MCF 10A (cell line): ENCODE measurements at regions of chr16 and their contacts with region 1.

Region 1: GRCh38 chr16:75519881-75520280 is 16.0 kb downstream of the CHST5 start:
- DNase-seq: no peak
- H3K4me3 Mint-ChIP-seq: no peak overlapping the region
- H3K27ac Mint-ChIP-seq: no peak overlapping the region
- H3K4me1 Mint-ChIP-seq: no peaks in the 10 kb centered on the region
- H3K27me3 Mint-ChIP-seq: no peaks in the 10 kb centered on the region
- CTCF ChIP-seq: no peak

Region 2: GRCh38 chr16:75471723-75472633 is 47.9 kb before region 1 on chr16:
- CTCF ChIA-PET with region 1: interaction called, 88 read pairs
- POLR2A ChIA-PET with region 1: interaction called, 9 read pairs
- intact Hi-C with region 1: loop called (anchors 1 kb)
- DNase-seq: peak; percentile 74
- H3K4me3 Mint-ChIP-seq: no peak overlapping the region
- H3K27ac Mint-ChIP-seq: no peak overlapping the region
- H3K4me1 Mint-ChIP-seq: peaks cover 9% of the 10 kb centered on the region
- H3K27me3 Mint-ChIP-seq: no peaks in the 10 kb centered on the region
- CTCF ChIP-seq: peak; percentile 77

Region 3: DNA sequence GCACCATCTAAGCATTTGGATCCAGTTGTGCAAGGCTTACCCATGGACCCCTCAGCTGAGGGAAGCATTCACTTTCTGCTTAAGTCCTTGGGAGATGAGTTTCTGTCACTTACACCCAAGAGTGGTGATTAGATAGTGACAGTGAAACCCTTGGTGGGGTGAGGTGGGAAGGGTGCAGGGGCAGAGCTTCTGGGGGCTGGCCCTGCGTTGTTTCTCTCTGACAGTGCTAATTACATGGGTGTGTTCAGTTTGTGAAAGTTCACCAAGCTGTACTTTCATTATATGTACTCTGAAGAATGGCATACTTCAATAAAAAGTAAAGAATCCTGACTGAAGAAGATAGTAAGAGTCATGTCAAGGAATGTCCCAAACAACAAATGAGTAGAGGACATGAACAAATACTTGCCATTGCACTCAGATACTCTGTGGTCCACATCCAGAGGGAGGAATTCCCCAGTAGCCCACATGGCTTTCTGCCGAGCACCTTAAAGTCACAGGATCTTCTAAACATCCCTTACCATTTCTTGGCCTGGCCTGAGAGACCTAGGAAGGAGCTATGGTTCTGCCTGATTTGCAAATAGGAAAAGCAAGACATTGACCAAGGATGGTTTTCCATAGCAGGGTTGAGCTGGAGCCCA is 33.1 kb before region 1 on chr16:
- CTCF ChIA-PET with region 1: interaction called, 18 read pairs
- POLR2A ChIA-PET with region 1: interaction called, 46 read pairs
- intact Hi-C with region 1: loop called (anchors 1 kb)
- DNase-seq: no peak
- H3K4me3 Mint-ChIP-seq: no peak overlapping the region
- H3K27ac Mint-ChIP-seq: peak overlapping the region; percentile 70
- H3K4me1 Mint-ChIP-seq: peaks cover 36% of the 10 kb centered on the region
- H3K27me3 Mint-ChIP-seq: no peaks in the 10 kb centered on the region
- CTCF ChIP-seq: no peak

Region 4: GRCh38 chr16:75506567-75506966 is 13.3 kb before region 1 on chr16:
- CTCF ChIA-PET with region 1: interaction called, 22 read pairs
- POLR2A ChIA-PET with region 1: interaction called, 9 read pairs
- intact Hi-C with region 1: no loop called
- DNase-seq: peak; percentile 98
- H3K4me3 Mint-ChIP-seq: peak overlapping the region; percentile 42
- H3K27ac Mint-ChIP-seq: peak overlapping the region; percentile 95
- H3K4me1 Mint-ChIP-seq: peaks cover 34% of the 10 kb centered on the region
- H3K27me3 Mint-ChIP-seq: no peaks in the 10 kb centered on the region
- CTCF ChIP-seq: no peak

Region 5: GRCh38 chr16:75555707-75556430 is 36.0 kb after region 1 on chr16 and contains the start of gene TMEM231:
- CTCF ChIA-PET with region 1: interaction called, 9 read pairs
- POLR2A ChIA-PET with region 1: interaction called, 13 read pairs
- intact Hi-C with region 1: loop called (anchors 2 kb)
- DNase-seq: peak; percentile 94
- H3K4me3 Mint-ChIP-seq: peak within 1 kb of the TSS; percentile 85
- H3K27ac Mint-ChIP-seq: peak within 1 kb of the TSS; percentile 91
- H3K4me1 Mint-ChIP-seq: peaks cover 6% of the 10 kb centered on the region
- H3K27me3 Mint-ChIP-seq: no peaks in the 10 kb centered on the region
- CTCF ChIP-seq: no peak
- total RNA-seq, gene TMEM231: 18.6 and 21.1 TPM in 2 replicates

Region 6: GRCh38 chr16:75622761-75623605 is 103.1 kb after region 1 on chr16 and contains the start of gene ADAT1:
- CTCF ChIA-PET with region 1: interaction called, 4 read pairs
- POLR2A ChIA-PET with region 1: interaction called, 12 read pairs
- intact Hi-C with region 1: loop called (anchors 5 kb)
- DNase-seq: peak; percentile 98
- H3K4me3 Mint-ChIP-seq: peak within 1 kb of the TSS; percentile 84
- H3K27ac Mint-ChIP-seq: peak within 1 kb of the TSS; percentile 72
- H3K4me1 Mint-ChIP-seq: peaks cover 25% of the 10 kb centered on the region
- H3K27me3 Mint-ChIP-seq: no peaks in the 10 kb centered on the region
- CTCF ChIP-seq: no peak
- total RNA-seq, gene ADAT1: 48.7 and 60.2 TPM in 2 replicates

Region 7: DNA sequence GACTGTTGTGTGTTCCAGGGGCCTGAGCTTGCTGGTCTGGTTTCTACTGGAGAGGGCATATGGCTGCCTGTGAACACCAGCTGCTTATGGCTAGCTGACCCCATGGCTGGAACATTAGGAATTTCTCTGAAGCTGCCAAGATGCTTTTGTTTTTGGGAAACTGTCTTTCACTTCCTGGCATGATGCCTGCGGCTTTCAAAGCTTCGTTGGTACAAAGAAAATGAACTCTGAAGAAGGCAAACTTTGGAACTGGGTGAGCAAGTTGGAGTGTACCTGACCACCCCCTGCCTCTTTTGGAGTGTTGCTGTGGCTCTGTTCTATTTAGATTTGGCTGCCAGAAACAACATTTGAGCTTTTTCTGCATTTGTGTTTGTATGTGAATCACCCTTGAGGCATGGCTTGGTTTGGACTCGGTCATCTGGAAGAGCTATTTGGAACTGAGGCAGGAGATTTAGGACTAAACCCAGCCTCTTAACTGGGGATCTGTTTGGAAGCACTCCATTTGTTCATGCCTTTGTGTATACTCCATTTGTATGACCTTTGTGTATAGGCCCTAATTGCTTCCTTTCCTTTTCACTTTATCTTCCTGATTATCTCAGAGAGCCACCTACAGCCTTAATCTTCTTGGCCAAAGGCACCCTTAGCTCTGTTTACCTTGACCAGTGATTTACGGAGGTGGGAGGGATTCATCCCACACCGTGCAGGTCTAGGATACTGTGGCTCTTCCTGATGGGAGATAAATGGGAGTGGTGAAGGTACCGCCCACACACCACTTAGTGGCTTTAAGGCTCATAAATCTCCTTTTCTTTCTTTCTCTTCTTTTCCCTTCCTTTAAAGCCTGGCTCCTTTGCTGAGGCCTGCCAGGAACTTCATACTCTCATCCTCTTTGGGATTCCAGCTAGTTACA is 213.7 kb after region 1 on chr16:
- CTCF ChIA-PET with region 1: no interaction called
- POLR2A ChIA-PET with region 1: no interaction called
- intact Hi-C with region 1: no loop called
- DNase-seq: peak; percentile 46
- H3K4me3 Mint-ChIP-seq: peak overlapping the region; percentile 4
- H3K27ac Mint-ChIP-seq: peak overlapping the region; percentile 37
- H3K4me1 Mint-ChIP-seq: peaks cover 15% of the 10 kb centered on the region
- H3K27me3 Mint-ChIP-seq: no peaks in the 10 kb centered on the region
- CTCF ChIP-seq: no peak

Region 8: GRCh38 chr16:75764154-75764768 is 244.4 kb after region 1 on chr16:
- CTCF ChIA-PET with region 1: no interaction called
- POLR2A ChIA-PET with region 1: no interaction called
- intact Hi-C with region 1: loop called (anchors 1 kb)
- DNase-seq: peak; percentile 75
- H3K4me3 Mint-ChIP-seq: no peak overlapping the region
- H3K27ac Mint-ChIP-seq: no peak overlapping the region
- H3K4me1 Mint-ChIP-seq: peaks cover 5% of the 10 kb centered on the region
- H3K27me3 Mint-ChIP-seq: peaks cover 13% of the 10 kb centered on the region
- CTCF ChIP-seq: peak; percentile 67

Region 9: GRCh38 chr16:76007649-76008048 is 487.8 kb after region 1 on chr16:
- CTCF ChIA-PET with region 1: no interaction called
- POLR2A ChIA-PET with region 1: no interaction called
- intact Hi-C with region 1: no loop called
- DNase-seq: no peak
- H3K4me3 Mint-ChIP-seq: no peak overlapping the region
- H3K27ac Mint-ChIP-seq: no peak overlapping the region
- H3K4me1 Mint-ChIP-seq: no peaks in the 10 kb centered on the region
- H3K27me3 Mint-ChIP-seq: no peaks in the 10 kb centered on the region
- CTCF ChIP-seq: no peak